Activated CD4-positive, alpha-beta T cell treated with anti-CD3 and anti-CD28 coated beads, Interleukin-2, amount 10 ng/mL, durations not matched to agents 24 days and 14 days (primary cell): ENCODE measurements at regions of chr17 and their contacts with region 1.

Region 1: GRCh38 chr17:49707608-49708514 is at the start of gene SLC35B1:
- DNase-seq: peak; percentile 99
- H3K4me3 Mint-ChIP-seq: peak within 1 kb of the TSS; percentile 96
- H3K27ac Mint-ChIP-seq: peak within 1 kb of the TSS; percentile 99
- H3K4me1 Mint-ChIP-seq: peaks cover 30% of the 10 kb centered on the region
- H3K27me3 Mint-ChIP-seq: no peaks in the 10 kb centered on the region
- total RNA-seq, gene SLC35B1: 78.9 and 79.5 TPM in 2 replicates

Region 2: GRCh38 chr17:49414622-49415350 is 293.1 kb before region 1 on chr17 and contains the start of gene PHB1:
- intact Hi-C with region 1: loop called (anchors 5 kb)
- DNase-seq: peak; percentile 98
- H3K4me3 Mint-ChIP-seq: peak within 1 kb of the TSS; percentile 91
- H3K27ac Mint-ChIP-seq: peak within 1 kb of the TSS; percentile 83
- H3K4me1 Mint-ChIP-seq: peaks cover 5% of the 10 kb centered on the region
- H3K27me3 Mint-ChIP-seq: peaks cover 4% of the 10 kb centered on the region
- total RNA-seq, gene PHB1: 440 and 448 TPM in 2 replicates

Region 3: DNA sequence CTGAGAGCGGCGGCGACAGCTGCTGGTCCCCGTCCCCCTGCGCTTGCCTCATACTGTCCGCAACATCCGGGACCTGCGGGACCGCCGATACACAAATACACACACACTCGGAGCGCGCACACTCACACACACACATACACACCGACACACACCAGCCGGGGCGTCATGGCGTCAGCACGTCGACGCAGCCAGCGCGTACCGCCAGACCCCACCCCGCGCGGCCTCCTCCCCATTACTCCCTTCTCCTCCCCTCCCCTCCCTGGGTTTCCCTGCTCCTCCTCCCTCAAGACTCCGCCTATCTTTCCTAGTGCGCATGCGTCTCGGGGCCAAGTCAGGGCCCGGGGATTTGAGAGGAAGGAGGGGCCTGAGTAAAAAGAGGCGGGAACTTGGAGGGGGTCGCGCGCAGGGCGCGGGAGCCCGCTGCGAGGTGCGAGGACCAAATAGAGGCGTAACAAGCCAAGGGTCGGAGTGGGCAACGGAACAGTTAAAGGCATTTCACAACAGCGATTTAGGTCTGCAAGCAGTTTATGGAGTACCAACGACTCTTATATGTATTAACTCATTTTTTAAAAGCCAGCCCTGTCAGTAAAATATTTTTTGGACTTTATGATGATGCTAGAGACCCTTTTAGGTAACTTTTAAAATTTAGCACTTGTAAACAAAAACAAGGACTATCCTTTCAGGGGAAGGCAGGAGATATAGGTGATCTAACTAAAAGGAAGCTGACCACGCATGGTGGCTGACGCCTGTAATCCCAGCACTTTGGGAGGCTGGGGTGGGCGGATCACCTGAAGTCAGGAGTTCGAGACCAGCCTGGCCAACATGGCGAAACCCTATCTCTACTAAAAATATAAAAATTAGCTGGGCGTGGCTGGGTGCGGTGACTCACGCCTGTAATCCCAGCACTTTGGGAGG is 29.7 kb before region 1 on chr17 and contains the start of gene SPOP:
- intact Hi-C with region 1: loop called (anchors 1 kb)
- DNase-seq: peak; percentile 100
- H3K4me3 Mint-ChIP-seq: peak within 1 kb of the TSS; percentile 95
- H3K27ac Mint-ChIP-seq: peak within 1 kb of the TSS; percentile 99
- H3K4me1 Mint-ChIP-seq: peaks cover 44% of the 10 kb centered on the region
- H3K27me3 Mint-ChIP-seq: peaks cover 7% of the 10 kb centered on the region
- total RNA-seq, gene SPOP: 56.0 and 61.4 TPM in 2 replicates

Region 4: GRCh38 chr17:49739641-49740271 is 31.9 kb after region 1 on chr17:
- intact Hi-C with region 1: loop called (anchors 1 kb)
- DNase-seq: peak; percentile 96
- H3K4me3 Mint-ChIP-seq: peak overlapping the region; percentile 87
- H3K27ac Mint-ChIP-seq: peak overlapping the region; percentile 99
- H3K4me1 Mint-ChIP-seq: peaks cover 66% of the 10 kb centered on the region
- H3K27me3 Mint-ChIP-seq: no peaks in the 10 kb centered on the region

Region 5: GRCh38 chr17:49752508-49752907 is 44.6 kb after region 1 on chr17:
- intact Hi-C with region 1: no loop called
- DNase-seq: no peak
- H3K4me3 Mint-ChIP-seq: no peak overlapping the region
- H3K27ac Mint-ChIP-seq: no peak overlapping the region
- H3K4me1 Mint-ChIP-seq: peaks cover 54% of the 10 kb centered on the region
- H3K27me3 Mint-ChIP-seq: no peaks in the 10 kb centered on the region

Region 6: GRCh38 chr17:49788478-49789242 is 80.8 kb after region 1 on chr17 and contains the start of gene KAT7:
- intact Hi-C with region 1: loop called (anchors 1 kb)
- DNase-seq: peak; percentile 99
- H3K4me3 Mint-ChIP-seq: peak within 1 kb of the TSS; percentile 89
- H3K27ac Mint-ChIP-seq: peak within 1 kb of the TSS; percentile 93
- H3K4me1 Mint-ChIP-seq: peaks cover 36% of the 10 kb centered on the region
- H3K27me3 Mint-ChIP-seq: no peaks in the 10 kb centered on the region
- total RNA-seq, gene KAT7: 67.2 and 75.2 TPM in 2 replicates

Region 7: GRCh38 chr17:49997791-49998703 is 290.2 kb after region 1 on chr17:
- intact Hi-C with region 1: loop called (anchors 10 kb)
- DNase-seq: peak; percentile 95
- H3K4me3 Mint-ChIP-seq: no peak overlapping the region
- H3K27ac Mint-ChIP-seq: no peak overlapping the region
- H3K4me1 Mint-ChIP-seq: peaks cover 20% of the 10 kb centered on the region
- H3K27me3 Mint-ChIP-seq: peaks cover 67% of the 10 kb centered on the region